Activated CD4-positive, alpha-beta memory T cell treated with anti-CD3 and anti-CD28 coated beads for 36 hours (primary cell): ENCODE measurements at regions of chr13 and their contacts with region 1.

Region 1: DNA sequence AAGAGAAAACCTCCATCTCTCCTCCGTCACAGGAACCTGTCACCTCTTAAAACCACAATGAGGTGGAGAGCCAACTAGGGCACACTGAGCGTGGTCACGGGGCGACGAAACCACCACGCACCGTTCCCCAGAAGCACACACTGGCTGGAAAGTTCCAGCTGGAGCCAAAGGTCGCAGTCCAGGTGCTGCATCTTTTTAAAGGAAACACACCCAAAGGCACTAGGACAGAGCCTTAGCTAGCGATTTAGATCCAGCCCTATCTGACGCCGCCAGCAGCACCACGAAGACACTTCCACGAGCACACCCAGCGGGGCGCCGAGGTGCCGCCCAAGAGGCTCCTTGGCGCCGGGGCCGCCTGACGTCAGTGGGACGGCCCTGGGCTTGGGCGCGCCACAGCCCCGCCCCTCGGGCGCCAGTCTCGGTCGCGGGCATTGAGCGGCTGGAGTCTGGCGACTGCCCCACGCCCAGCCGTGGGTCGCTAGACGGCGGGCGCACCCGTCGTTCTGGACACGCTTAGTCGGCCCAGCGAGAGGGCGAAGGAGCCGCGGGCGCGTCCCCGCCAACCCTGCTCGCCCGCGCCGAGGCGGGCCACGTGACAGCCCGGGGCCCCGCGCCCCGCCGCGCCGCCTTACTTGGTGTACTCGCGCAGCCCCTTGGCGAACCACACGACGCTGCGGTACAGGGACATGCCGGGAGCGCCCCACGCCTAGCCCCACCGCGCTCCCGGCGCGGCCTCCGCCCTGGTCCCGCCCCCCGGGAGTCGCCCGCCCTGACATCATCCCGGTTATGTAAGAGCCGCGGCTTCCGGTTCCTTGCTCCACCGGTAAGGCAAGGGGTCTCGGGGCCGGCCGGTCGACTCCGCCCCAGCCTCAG is at the start of gene DHRS12:
- DNase-seq: peak; percentile 89
- H3K4me3 Mint-ChIP-seq: peak within 1 kb of the TSS; percentile 94
- H3K27ac Mint-ChIP-seq: peak within 1 kb of the TSS; percentile 100
- H3K4me1 Mint-ChIP-seq: peaks cover 58% of the 10 kb centered on the region
- H3K27me3 Mint-ChIP-seq: peaks cover 2% of the 10 kb centered on the region
- total RNA-seq, gene DHRS12: 6.7 to 7.0 TPM

Region 2: GRCh38 chr13:51154029-51154555 is 649.6 kb before region 1 on chr13:
- CTCF ChIA-PET with region 1: no interaction called
- POLR2A ChIA-PET with region 1: no interaction called
- intact Hi-C with region 1: loop called (anchors 2 kb)
- DNase-seq: peak; percentile 41
- H3K4me3 Mint-ChIP-seq: peak overlapping the region; percentile 13
- H3K27ac Mint-ChIP-seq: peak overlapping the region; percentile 53
- H3K4me1 Mint-ChIP-seq: peaks cover 13% of the 10 kb centered on the region
- H3K27me3 Mint-ChIP-seq: peaks cover 16% of the 10 kb centered on the region

Region 3: GRCh38 chr13:51645154-51645650 is 158.5 kb before region 1 on chr13:
- CTCF ChIA-PET with region 1: no interaction called
- POLR2A ChIA-PET with region 1: no interaction called
- intact Hi-C with region 1: loop called (anchors 2 kb)
- DNase-seq: peak; percentile 32
- H3K4me3 Mint-ChIP-seq: peak overlapping the region; percentile 38
- H3K27ac Mint-ChIP-seq: peak overlapping the region; percentile 68
- H3K4me1 Mint-ChIP-seq: peaks cover 46% of the 10 kb centered on the region
- H3K27me3 Mint-ChIP-seq: no peaks in the 10 kb centered on the region

Region 4: DNA sequence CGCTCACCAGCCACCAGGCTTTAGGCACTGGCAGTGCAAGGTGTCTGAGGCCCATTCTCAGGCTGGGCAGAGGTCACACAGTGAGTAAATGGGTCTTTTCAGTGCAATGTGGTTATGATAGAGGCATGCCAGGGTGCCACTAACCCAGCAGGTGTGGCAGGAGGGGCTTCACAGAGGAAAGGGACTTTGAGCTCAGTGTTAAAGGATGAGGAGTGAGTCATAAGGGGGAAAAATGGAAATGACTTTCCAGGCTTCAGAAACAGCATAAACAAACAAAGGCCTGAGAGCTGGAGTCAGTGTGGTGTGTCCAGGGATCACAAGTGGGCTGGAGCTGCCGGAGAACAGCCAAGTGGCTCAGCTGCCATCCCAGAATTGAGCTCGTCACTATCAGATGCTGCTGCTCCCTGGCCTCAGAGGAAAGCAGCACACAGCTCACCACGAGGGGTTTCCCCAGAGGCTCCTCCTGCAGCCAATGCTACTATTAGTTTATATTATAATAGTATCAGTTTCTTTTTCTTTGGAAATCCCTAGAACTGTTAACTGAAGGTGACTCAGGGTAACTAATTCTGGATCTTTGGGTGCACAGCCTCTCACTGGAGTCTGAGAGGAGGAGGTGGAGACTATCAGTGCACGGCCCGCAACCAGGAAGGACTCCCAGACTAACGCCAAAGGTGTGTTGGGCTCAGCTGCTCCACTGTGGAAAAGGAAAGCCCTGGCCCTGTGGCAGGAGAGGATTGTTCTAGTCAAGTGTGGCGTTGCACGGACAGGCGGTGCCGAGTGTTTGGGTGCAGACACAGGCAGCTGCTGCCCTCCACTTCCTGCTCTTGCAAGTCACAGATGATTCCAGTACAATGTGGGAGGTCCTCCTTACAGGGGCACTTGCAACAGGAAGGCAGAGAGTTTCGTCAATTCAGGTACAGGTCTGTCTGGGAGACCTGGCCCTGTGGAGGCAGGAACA is 39.2 kb before region 1 on chr13:
- CTCF ChIA-PET with region 1: interaction called, 10 read pairs
- POLR2A ChIA-PET with region 1: interaction called, 7 read pairs
- intact Hi-C with region 1: loop called (anchors 1 kb)
- DNase-seq: peak; percentile 81
- H3K4me3 Mint-ChIP-seq: peak overlapping the region; percentile 77
- H3K27ac Mint-ChIP-seq: peak overlapping the region; percentile 95
- H3K4me1 Mint-ChIP-seq: peaks cover 42% of the 10 kb centered on the region
- H3K27me3 Mint-ChIP-seq: no peaks in the 10 kb centered on the region

Region 5: DNA sequence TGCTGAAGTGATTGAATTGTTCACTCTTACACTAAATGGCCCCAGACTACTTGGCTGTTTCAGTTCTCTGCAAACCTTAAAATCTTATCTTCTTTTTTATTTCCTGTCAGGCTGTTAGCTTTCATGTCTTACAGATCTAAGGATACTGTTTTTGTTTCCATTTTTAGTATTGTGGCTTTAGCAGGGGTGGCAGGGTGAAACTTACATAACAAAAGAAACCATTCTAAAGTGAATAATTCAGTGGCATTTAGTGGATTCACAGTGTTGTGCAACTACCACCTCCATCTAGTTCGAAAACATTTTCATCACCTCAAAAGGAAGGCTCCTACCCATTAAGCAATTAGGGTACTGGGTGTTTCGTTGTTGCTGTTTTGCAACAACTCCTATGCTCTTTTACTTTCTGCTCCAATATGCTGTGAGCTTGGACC is 21.5 kb after region 1 on chr13:
- CTCF ChIA-PET with region 1: interaction called, 11 read pairs
- POLR2A ChIA-PET with region 1: interaction called, 6 read pairs
- intact Hi-C with region 1: loop called (anchors 1 kb)
- DNase-seq: no peak
- H3K4me3 Mint-ChIP-seq: peak overlapping the region; percentile 52
- H3K27ac Mint-ChIP-seq: peak overlapping the region; percentile 84
- H3K4me1 Mint-ChIP-seq: peaks cover 81% of the 10 kb centered on the region
- H3K27me3 Mint-ChIP-seq: no peaks in the 10 kb centered on the region